ENCODE measurements at regions of chr20 and their contacts with region 1.

Region 1: DNA sequence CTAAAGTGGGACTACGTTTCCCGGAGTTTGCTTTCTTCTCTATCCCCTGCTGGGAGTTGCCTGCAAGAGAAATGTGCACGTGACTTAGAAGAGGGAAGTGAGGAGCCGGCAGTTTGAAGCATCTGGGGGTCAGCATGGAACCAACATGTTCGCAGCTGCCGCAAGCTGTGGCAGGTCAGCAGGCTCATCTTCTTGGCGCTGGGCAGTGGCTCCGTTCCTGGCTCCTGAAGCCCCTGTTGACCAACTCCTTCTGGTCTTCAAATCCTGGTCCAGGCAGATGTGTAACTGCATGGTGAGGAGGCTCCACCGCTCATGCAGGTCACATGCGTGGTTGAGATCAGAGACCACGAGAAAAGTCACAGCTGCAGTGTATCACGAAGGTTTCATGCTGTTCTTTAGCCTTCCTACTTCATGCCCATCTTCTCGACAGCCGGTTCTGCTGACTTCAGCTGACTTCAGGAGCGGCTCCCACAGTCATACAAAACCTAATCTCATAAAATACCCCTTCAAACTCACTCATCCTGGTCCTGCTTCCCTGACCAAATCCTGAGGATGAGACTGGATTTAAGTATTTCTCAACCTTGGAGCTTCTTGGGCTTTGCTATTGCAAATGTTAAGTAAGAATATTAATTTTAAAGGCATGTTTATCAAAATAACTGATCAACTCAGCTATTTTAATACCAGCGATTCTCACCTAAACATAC is 44.9 kb upstream of the BCAS1 start:
- DNase-seq: no peak
- ATAC-seq: peak in 1 of 8 donors; percentile 60
- H3K4me3 ChIP-seq: no peak overlapping the region
- H3K27ac ChIP-seq: peak overlapping the region in 1 of 10 donors; percentile 36
- H3K4me1 ChIP-seq: peaks cover 0 to 14% (median 0%) of the 10 kb centered on the region in 9 donors
- H3K27me3 ChIP-seq: peaks cover 0 to 19% (median 0%) of the 10 kb centered on the region in 7 donors
- CTCF ChIP-seq: no peak

Region 2: DNA sequence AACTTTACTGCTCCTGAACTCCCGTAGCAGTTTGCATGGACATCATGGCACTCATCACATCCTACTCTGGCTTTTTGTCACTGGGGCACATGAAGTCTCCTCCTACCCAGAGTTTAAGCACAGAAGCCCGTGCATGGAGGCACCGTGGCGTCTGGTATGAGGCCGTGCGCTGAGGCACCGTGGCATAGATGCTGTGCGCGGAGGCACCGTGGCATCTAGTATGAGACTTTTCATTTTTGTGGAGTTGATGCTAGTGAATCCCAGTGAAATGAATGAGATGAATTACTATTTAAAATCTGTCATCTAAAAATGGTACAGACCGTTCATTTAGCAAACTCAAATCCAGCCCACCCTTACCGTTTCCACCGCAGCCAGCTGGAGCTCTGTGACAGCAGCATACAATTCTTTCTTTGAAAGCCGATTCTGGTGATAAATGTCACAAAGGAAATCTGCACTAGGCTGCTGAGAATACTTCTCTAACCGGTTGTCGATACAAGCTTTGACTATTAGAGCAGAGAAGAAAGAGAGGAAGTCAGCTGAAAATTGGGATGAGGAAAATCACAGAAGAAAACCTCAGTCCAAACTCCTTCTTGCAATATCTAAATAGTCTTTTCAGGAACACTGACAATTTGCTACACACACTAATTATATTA is 47.2 kb after region 1 on chr20:
- intact Hi-C with region 1: no loop called
- DNase-seq: no peak
- ATAC-seq: no peak
- H3K4me3 ChIP-seq: no peak overlapping the region
- H3K27ac ChIP-seq: no peak overlapping the region
- H3K4me1 ChIP-seq: no peaks in the 10 kb centered on the region
- H3K27me3 ChIP-seq: peaks cover 0 to 62% (median 45%) of the 10 kb centered on the region in 7 donors
- CTCF ChIP-seq: no peak

Region 3: DNA sequence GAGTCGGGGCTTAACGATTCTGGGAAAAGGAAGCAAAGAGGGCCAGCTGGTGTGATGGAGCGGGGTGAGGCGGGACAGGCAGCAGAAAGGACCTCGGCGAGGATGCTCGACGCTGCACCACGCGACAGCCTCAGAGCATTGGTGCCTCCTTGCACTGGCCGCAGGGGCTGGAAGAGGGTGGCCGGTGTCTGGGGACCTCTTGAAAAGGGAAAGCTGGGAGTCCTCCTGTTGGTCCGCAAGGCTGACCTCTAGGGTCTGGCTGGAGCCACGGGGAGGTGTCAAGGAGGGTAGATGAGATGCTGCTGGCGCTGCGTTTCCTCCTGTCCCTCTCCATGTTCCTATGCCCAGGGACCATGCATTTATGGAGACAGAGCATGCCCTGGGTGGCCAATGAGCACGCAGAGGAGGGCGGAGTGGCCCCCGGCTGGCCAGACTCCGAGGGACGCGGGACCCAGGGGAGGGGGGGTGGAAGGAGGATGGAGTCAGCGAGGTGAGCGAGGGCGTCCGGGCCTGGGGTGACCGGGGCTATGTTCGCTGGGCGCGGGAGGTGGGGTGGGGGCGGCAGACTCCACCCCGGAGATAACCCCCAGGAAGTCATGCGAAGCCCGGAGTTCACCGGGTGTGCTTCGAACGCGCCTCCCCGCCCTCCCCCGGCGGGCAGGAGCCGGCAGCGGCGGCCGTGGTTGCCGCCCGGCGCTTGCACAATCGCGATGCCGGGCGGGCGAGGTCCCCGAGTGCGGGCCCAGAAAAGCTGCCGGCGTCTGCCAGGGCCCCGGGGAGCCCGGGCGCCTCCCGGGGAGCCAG is 58.6 kb after region 1 on chr20 and contains the start of gene CYP24A1:
- intact Hi-C with region 1: loop called in 1 of 10 experiments (anchors 10 kb)
- DNase-seq: no peak
- ATAC-seq: peak in 1 of 8 donors; percentile 41
- H3K4me3 ChIP-seq: peak within 1 kb of the TSS in 8 of 10 donors; percentile 5 to 29 (median 12)
- H3K27ac ChIP-seq: no peak within 1 kb of the TSS
- H3K4me1 ChIP-seq: peaks cover 0 to 29% (median 21%) of the 10 kb centered on the region in 9 donors
- H3K27me3 ChIP-seq: peaks cover 11 to 100% (median 92%) of the 10 kb centered on the region in 7 donors
- CTCF ChIP-seq: no peak
- total RNA-seq, gene CYP24A1: not detected

Measured in heart right ventricle (tissue), 16 donors.